Endothelial cell of umbilical vein (primary cell): ENCODE measurements at regions of chr7 and their contacts with region 1.

Region 1: DNA sequence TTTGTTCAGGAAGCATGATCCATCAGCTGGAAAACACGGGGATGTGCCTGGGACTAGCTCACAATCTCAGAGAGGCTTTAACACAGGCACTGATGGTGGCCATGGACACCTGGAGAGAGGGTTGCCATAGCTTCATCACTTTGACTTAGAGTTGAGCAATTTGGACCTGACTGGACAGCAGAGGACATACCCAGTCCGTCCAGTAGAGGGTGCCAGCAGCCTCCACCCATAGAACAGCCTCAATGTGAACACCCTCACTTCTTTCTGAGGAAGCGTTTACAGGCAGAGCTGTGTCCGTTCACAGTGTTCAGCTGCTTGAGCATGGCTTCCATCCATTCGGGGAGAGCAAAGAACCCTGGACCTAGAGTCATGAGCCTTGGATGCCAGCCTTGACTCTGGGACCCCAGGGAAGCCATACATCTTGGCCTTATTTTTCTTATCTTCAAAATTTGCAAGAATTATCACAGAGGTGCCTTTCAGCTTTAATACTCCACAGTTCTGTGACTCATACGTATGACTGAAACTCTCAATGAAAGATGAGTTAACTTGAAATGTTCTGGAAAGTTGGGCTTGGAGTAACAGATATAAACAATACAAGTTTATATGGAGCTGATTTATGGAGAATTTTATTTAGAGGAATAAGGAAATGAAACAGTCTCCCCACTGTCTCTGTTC is 302.9 kb upstream of the PODXL start:
- DNase-seq: peak; percentile 82
- H3K4me3 ChIP-seq: no peak overlapping the region
- H3K27ac ChIP-seq: no peak overlapping the region
- H3K4me1 ChIP-seq: peaks cover 17% of the 10 kb centered on the region
- H3K27me3 ChIP-seq: peaks cover 5 to 12% of the 10 kb centered on the region in 2 experiments
- CTCF ChIP-seq: peak; percentile 82 to 92
- POLR2A ChIP-seq: no peak

Region 2: GRCh38 chr7:131674131-131674530 is 185.2 kb before region 1 on chr7:
- CTCF ChIA-PET with region 1: no interaction called
- POLR2A ChIA-PET with region 1: no interaction called
- dilution Hi-C with region 1: no loop called
- intact Hi-C with region 1: no loop called
- DNase-seq: no peak
- H3K4me3 ChIP-seq: no peak overlapping the region
- H3K27ac ChIP-seq: no peak overlapping the region
- H3K4me1 ChIP-seq: no peaks in the 10 kb centered on the region
- H3K27me3 ChIP-seq: peaks cover 14 to 19% of the 10 kb centered on the region in 2 experiments
- CTCF ChIP-seq: no peak
- POLR2A ChIP-seq: no peak

Region 3: DNA sequence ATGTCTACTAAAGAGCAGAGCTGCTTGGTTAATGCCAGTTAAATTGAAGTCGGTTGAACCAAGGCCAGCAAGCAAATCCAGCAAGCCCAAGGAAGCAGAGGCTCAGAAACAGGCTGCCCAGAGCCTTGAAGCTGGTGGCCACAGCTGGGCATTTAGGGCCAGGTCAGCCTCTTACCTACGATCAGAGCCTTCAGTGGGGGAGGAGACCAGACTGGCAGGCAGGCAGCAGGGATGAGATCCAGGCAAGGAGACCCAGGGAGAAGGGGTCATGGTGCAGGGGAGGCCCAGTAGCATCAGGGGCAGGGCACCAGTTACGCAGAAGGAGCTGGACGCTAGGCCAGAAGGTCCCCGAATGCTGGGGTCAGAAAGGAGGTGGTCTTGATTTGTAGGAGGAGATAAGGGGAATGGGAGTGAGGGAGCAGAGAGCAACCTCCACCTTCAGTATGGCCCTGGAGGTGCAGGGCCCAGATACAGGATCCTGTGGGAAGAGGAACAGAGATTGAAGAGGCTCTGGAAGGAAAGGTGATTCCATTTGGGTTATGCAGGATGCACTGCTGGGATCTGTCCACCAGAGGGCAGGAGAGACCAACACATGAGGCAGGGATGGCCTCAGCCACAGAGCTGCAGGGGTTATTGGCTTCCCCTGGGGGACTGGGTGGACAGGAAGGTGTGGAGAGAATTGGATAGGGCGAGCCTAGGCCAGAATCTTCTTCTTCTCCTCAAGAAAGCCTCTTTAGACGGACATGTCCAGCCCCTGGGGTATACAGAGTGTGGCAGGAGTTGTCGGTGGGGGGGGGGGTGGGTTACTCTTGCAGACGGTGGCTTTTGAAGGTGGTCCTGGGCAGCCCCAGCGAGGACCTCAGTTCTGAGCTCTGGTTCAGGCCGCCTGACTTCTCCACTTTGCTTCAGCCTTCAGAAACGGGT is 170.3 kb before region 1 on chr7:
- CTCF ChIA-PET with region 1: interaction called, 14 read pairs
- POLR2A ChIA-PET with region 1: no interaction called
- dilution Hi-C with region 1: no loop called
- intact Hi-C with region 1: loop called (anchors 1 kb)
- DNase-seq: peak; percentile 61
- H3K4me3 ChIP-seq: no peak overlapping the region
- H3K27ac ChIP-seq: no peak overlapping the region
- H3K4me1 ChIP-seq: no peaks in the 10 kb centered on the region
- H3K27me3 ChIP-seq: peaks cover 0 to 2% of the 10 kb centered on the region in 2 experiments
- CTCF ChIP-seq: peak; percentile 89 to 94
- POLR2A ChIP-seq: no peak

Region 4: GRCh38 chr7:131882321-131882720 is 23.0 kb after region 1 on chr7:
- CTCF ChIA-PET with region 1: interaction called, 17 read pairs
- POLR2A ChIA-PET with region 1: no interaction called
- dilution Hi-C with region 1: no loop called
- intact Hi-C with region 1: no loop called
- DNase-seq: no peak
- H3K4me3 ChIP-seq: no peak overlapping the region
- H3K27ac ChIP-seq: no peak overlapping the region
- H3K4me1 ChIP-seq: no peaks in the 10 kb centered on the region
- H3K27me3 ChIP-seq: peaks cover 18 to 21% of the 10 kb centered on the region in 2 experiments
- CTCF ChIP-seq: no peak
- POLR2A ChIP-seq: no peak

Region 5: DNA sequence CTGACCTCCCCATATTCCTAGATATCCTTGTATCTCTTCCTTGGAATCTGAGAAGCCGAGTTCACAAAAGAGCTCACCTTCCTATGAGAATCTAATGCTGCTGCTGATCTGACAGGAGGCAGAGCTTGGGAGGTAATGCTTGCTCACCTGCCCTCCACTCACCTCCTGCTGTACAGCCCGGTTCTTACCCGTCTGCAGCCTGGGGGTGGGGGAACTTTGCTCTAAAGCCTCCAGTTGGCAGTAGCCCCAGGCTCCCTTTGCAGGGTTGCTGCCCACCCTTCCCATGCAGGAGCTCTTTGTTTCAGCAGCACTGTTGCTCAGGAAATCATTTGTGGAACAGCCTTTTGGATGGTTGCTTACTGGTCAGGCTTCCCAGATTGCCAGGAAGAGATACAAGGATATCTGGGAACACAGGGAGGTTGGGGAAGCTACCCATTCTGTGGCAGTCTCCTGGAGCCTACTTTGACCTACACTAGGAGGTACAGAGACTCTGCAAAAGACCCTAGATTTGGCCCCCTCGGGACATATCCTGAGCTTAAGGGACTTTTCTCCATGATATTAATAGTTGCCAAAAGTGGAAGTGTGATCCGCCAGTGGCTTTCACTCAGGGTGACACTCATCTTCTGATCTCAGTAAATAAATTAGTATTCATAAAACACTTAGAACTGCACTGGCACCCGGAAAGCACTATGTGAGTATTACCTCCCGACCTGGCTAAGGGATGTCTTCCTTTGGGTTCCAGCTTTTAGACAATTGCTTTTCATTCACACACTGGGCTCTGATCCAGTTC is 60.8 kb after region 1 on chr7:
- CTCF ChIA-PET with region 1: interaction called, 12 read pairs
- POLR2A ChIA-PET with region 1: no interaction called
- dilution Hi-C with region 1: no loop called
- intact Hi-C with region 1: no loop called
- DNase-seq: no peak
- H3K4me3 ChIP-seq: no peak overlapping the region
- H3K27ac ChIP-seq: no peak overlapping the region
- H3K4me1 ChIP-seq: no peaks in the 10 kb centered on the region
- H3K27me3 ChIP-seq: peaks cover 6 to 13% of the 10 kb centered on the region in 2 experiments
- CTCF ChIP-seq: no peak
- POLR2A ChIP-seq: no peak

Region 6: DNA sequence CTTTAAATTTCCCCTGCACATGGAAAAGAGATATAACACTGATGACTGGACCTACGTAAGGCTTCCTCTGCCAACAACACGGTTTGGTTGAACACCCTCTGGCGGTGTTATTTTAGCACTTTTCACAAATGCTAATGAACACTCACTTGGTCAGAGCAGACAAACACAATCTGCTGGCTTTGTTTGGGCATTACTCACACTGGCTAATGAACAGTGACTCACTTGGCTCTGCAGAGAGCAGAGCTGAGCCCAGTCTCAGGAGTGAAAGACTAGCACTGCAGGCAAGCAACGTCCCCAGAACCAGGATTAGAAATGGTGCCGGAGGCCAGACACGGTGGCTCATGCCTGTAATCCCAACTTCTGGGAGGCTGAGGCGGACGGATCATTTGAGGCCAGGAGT is 286.2 kb after region 1 on chr7:
- CTCF ChIA-PET with region 1: interaction called, 6 read pairs
- POLR2A ChIA-PET with region 1: no interaction called
- dilution Hi-C with region 1: no loop called
- intact Hi-C with region 1: loop called (anchors 1 kb)
- DNase-seq: peak; percentile 88
- H3K4me3 ChIP-seq: no peak overlapping the region
- H3K27ac ChIP-seq: peak overlapping the region; percentile 49
- H3K4me1 ChIP-seq: peaks cover 8% of the 10 kb centered on the region
- H3K27me3 ChIP-seq: no peaks in the 10 kb centered on the region
- CTCF ChIP-seq: peak in 1 of 2 donors; percentile 18
- POLR2A ChIP-seq: no peak

Region 7: GRCh38 chr7:132292803-132293202 is 433.5 kb after region 1 on chr7:
- CTCF ChIA-PET with region 1: interaction called, 6 read pairs
- POLR2A ChIA-PET with region 1: no interaction called
- dilution Hi-C with region 1: no loop called
- intact Hi-C with region 1: loop called (anchors 5 kb)
- DNase-seq: peak; percentile 84
- H3K4me3 ChIP-seq: no peak overlapping the region
- H3K27ac ChIP-seq: peak overlapping the region; percentile 64
- H3K4me1 ChIP-seq: peaks cover 54% of the 10 kb centered on the region
- H3K27me3 ChIP-seq: no peaks in the 10 kb centered on the region
- CTCF ChIP-seq: no peak
- POLR2A ChIP-seq: no peak